Endothelial cell of umbilical vein (primary cell): ENCODE measurements at regions of chr15 and their contacts with region 1.

Region 1: DNA sequence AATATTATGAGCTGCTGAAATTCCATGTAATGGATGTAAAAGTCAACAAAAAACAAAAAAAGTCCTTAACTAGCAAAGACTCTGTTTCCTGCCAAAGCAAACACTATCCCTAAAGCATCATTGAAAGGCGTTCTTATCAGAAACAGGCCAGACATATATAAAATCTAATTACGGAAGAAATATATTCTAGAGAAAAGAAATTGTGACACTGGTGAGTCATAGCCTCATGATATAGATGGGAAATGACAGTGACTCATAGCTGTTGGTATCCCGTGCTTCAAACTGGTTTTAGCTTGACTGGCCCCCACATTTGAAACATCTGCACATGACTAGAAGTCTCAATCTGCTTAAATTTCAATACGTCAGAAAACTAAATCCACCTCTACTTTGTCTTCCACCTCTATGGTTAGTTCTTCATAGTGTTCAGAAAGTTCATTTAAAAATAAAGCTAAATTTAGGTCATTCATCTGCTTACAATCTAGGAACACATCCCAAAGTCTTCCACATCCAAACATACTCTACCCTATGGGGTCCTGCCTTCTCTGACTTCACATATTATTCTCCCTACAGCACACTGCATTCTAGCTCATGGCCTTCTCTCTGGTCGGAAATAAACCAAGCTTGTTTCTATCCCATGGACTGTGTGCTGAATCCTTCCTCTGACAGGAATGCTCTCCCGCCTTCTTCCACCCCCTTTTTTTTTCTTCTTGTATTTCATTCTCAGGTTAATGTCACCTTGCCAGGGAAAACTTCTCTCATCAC is 456.3 kb upstream of the ARRDC4 start:
- DNase-seq: peak; percentile 97
- H3K4me3 ChIP-seq: no peak overlapping the region
- H3K27ac ChIP-seq: peak overlapping the region; percentile 99
- H3K4me1 ChIP-seq: peaks cover 34% of the 10 kb centered on the region
- H3K27me3 ChIP-seq: no peaks in the 10 kb centered on the region
- CTCF ChIP-seq: no peak
- POLR2A ChIP-seq: peak; percentile 71

Region 2: GRCh38 chr15:97316362-97316761 is 187.8 kb before region 1 on chr15:
- CTCF ChIA-PET with region 1: no interaction called
- POLR2A ChIA-PET with region 1: no interaction called
- dilution Hi-C with region 1: no loop called
- intact Hi-C with region 1: no loop called
- DNase-seq: no peak
- H3K4me3 ChIP-seq: no peak overlapping the region
- H3K27ac ChIP-seq: no peak overlapping the region
- H3K4me1 ChIP-seq: no peaks in the 10 kb centered on the region
- H3K27me3 ChIP-seq: no peaks in the 10 kb centered on the region
- CTCF ChIP-seq: no peak
- POLR2A ChIP-seq: no peak

Region 3: DNA sequence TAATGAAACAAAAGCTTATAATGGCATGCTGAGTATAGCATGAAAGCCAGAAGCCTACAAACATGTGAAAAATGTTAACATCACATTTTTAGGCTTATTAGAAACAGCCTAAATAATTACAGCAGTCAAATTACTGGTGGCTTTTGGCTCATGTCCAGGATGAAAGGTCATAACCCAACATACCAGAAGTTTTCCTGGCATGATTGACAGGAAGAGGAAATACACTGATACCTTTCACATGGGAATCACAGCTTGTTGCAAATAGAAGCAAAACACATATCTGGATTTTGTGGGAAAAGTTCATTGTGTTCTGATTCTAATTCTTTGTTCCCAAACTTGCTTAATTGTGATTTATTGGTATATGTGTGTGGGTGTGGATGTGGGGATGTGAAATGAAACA is 62.7 kb after region 1 on chr15:
- CTCF ChIA-PET with region 1: interaction called, 3 read pairs
- POLR2A ChIA-PET with region 1: interaction called, 4 read pairs
- dilution Hi-C with region 1: no loop called
- intact Hi-C with region 1: loop called (anchors 1 kb)
- DNase-seq: peak; percentile 97
- H3K4me3 ChIP-seq: no peak overlapping the region
- H3K27ac ChIP-seq: peak overlapping the region; percentile 42
- H3K4me1 ChIP-seq: peaks cover 18% of the 10 kb centered on the region
- H3K27me3 ChIP-seq: no peaks in the 10 kb centered on the region
- CTCF ChIP-seq: no peak
- POLR2A ChIP-seq: no peak

Region 4: DNA sequence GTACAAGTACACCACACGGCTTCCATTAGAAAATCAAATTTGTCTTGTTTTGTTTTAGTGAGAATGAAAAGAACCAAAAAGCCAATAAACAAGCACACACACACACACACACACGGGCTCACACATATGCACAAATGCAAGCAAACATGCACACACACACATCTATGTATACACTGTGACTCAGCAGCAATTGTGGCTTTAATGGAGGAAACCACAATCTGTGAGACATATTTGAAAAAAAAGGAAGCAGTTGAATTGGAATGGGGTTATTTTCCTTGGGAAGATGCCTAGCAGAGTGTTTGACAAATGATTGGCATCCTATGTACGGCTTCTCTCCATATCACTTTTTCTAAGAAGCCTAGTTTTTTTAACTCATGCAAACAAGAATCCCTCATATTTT is 255.2 kb after region 1 on chr15:
- CTCF ChIA-PET with region 1: no interaction called
- POLR2A ChIA-PET with region 1: no interaction called
- dilution Hi-C with region 1: no loop called
- intact Hi-C with region 1: loop called (anchors 5 kb)
- DNase-seq: peak; percentile 62
- H3K4me3 ChIP-seq: no peak overlapping the region
- H3K27ac ChIP-seq: no peak overlapping the region
- H3K4me1 ChIP-seq: peaks cover 4% of the 10 kb centered on the region
- H3K27me3 ChIP-seq: peaks cover 4 to 18% of the 10 kb centered on the region in 2 experiments
- CTCF ChIP-seq: no peak
- POLR2A ChIP-seq: no peak

Region 5: GRCh38 chr15:98668566-98669308 is 1164.5 kb after region 1 on chr15:
- CTCF ChIA-PET with region 1: no interaction called
- POLR2A ChIA-PET with region 1: no interaction called
- dilution Hi-C with region 1: no loop called
- intact Hi-C with region 1: loop called (anchors 10 kb)
- DNase-seq: peak; percentile 75
- H3K4me3 ChIP-seq: peak overlapping the region in 1 of 3 experiments; percentile 5
- H3K27ac ChIP-seq: peak overlapping the region; percentile 64
- H3K4me1 ChIP-seq: peaks cover 49% of the 10 kb centered on the region
- H3K27me3 ChIP-seq: no peaks in the 10 kb centered on the region
- CTCF ChIP-seq: no peak
- POLR2A ChIP-seq: no peak